Activated B cell treated with CpG ODN at 0.5 μM for 24 hours (primary cell): ENCODE measurements at regions of chr4 and their contacts with region 1.

Region 1: GRCh38 chr4:88320780-88321373 is 36.5 kb upstream of the PPM1K start:
- DNase-seq: peak; percentile 33
- ATAC-seq: peak; percentile 99
- H3K4me3 Mint-ChIP-seq: peak overlapping the region; percentile 80
- H3K27ac Mint-ChIP-seq: peak overlapping the region; percentile 97
- H3K4me1 Mint-ChIP-seq: peaks cover 35% of the 10 kb centered on the region
- H3K27me3 Mint-ChIP-seq: no peaks in the 10 kb centered on the region
- CTCF ChIP-seq: no peak

Region 2: GRCh38 chr4:88275516-88275915 is 45.4 kb before region 1 on chr4:
- CTCF ChIA-PET with region 1: interaction called, 3 read pairs
- POLR2A ChIA-PET with region 1: interaction called, 16 read pairs
- intact Hi-C with region 1: loop called (anchors 1 kb)
- DNase-seq: no peak
- ATAC-seq: peak; percentile 93
- H3K4me3 Mint-ChIP-seq: peak overlapping the region; percentile 59
- H3K27ac Mint-ChIP-seq: peak overlapping the region; percentile 79
- H3K4me1 Mint-ChIP-seq: peaks cover 72% of the 10 kb centered on the region
- H3K27me3 Mint-ChIP-seq: no peaks in the 10 kb centered on the region
- CTCF ChIP-seq: no peak

Region 3: GRCh38 chr4:88523325-88524129 is 202.7 kb after region 1 on chr4 and contains the start of gene PYURF:
- CTCF ChIA-PET with region 1: no interaction called
- POLR2A ChIA-PET with region 1: no interaction called
- intact Hi-C with region 1: loop called (anchors 2 kb)
- DNase-seq: peak; percentile 72
- ATAC-seq: peak; percentile 84
- H3K4me3 Mint-ChIP-seq: peak within 1 kb of the TSS; percentile 95
- H3K27ac Mint-ChIP-seq: peak within 1 kb of the TSS; percentile 85
- H3K4me1 Mint-ChIP-seq: peaks cover 18% of the 10 kb centered on the region
- H3K27me3 Mint-ChIP-seq: no peaks in the 10 kb centered on the region
- CTCF ChIP-seq: no peak
- total RNA-seq, gene PYURF: 42.2 and 48.3 TPM in 2 replicates

Region 4: GRCh38 chr4:88623097-88623496 is 302.2 kb after region 1 on chr4:
- CTCF ChIA-PET with region 1: no interaction called
- POLR2A ChIA-PET with region 1: no interaction called
- intact Hi-C with region 1: no loop called
- DNase-seq: no peak
- ATAC-seq: no peak
- H3K4me3 Mint-ChIP-seq: no peak overlapping the region
- H3K27ac Mint-ChIP-seq: no peak overlapping the region
- H3K4me1 Mint-ChIP-seq: peaks cover 32% of the 10 kb centered on the region
- H3K27me3 Mint-ChIP-seq: no peaks in the 10 kb centered on the region
- CTCF ChIP-seq: no peak